Heart right ventricle (tissue), 16 donors: ENCODE measurements at regions of chr11 and their contacts with region 1.

Region 1: GRCh38 chr11:86671682-86672621 is at the start of gene ME3:
- DNase-seq: peak; percentile 72 to 73
- ATAC-seq: peak; percentile 80 to 89 (median 86)
- H3K4me3 ChIP-seq: peak within 1 kb of the TSS; percentile 48 to 88 (median 82)
- H3K27ac ChIP-seq: peak within 1 kb of the TSS; percentile 74 to 97 (median 94)
- H3K4me1 ChIP-seq: peaks cover 3 to 62% (median 16%) of the 10 kb centered on the region in 9 donors
- H3K27me3 ChIP-seq: peaks cover 0 to 9% (median 0%) of the 10 kb centered on the region in 7 donors
- CTCF ChIP-seq: peak in 1 of 9 donors; percentile 10
- total RNA-seq, gene ME3: 17.4 to 39.8 (median 33.7) TPM

Region 2: GRCh38 chr11:86735462-86736302 is 63.7 kb after region 1 on chr11:
- intact Hi-C with region 1: loop called in 1 of 10 experiments (anchors 10 kb)
- DNase-seq: no peak
- ATAC-seq: no peak
- H3K4me3 ChIP-seq: no peak overlapping the region
- H3K27ac ChIP-seq: no peak overlapping the region
- H3K4me1 ChIP-seq: peaks cover 4 to 30% (median 18%) of the 10 kb centered on the region in 9 donors
- H3K27me3 ChIP-seq: no peaks in the 10 kb centered on the region
- CTCF ChIP-seq: no peak